ENCODE measurements at regions of chr17 and their contacts with region 1.

Region 1: GRCh38 chr17:45161019-45161825 is 453 bp upstream of the HEXIM2 start:
- DNase-seq: peak; percentile 98
- ATAC-seq: peak; percentile 93
- H3K4me3 Mint-ChIP-seq: peak overlapping the region; percentile 99
- H3K27ac Mint-ChIP-seq: peak overlapping the region; percentile 95
- H3K4me1 Mint-ChIP-seq: peaks cover 32% of the 10 kb centered on the region
- H3K27me3 Mint-ChIP-seq: no peaks in the 10 kb centered on the region
- CTCF ChIP-seq: no peak

Region 2: DNA sequence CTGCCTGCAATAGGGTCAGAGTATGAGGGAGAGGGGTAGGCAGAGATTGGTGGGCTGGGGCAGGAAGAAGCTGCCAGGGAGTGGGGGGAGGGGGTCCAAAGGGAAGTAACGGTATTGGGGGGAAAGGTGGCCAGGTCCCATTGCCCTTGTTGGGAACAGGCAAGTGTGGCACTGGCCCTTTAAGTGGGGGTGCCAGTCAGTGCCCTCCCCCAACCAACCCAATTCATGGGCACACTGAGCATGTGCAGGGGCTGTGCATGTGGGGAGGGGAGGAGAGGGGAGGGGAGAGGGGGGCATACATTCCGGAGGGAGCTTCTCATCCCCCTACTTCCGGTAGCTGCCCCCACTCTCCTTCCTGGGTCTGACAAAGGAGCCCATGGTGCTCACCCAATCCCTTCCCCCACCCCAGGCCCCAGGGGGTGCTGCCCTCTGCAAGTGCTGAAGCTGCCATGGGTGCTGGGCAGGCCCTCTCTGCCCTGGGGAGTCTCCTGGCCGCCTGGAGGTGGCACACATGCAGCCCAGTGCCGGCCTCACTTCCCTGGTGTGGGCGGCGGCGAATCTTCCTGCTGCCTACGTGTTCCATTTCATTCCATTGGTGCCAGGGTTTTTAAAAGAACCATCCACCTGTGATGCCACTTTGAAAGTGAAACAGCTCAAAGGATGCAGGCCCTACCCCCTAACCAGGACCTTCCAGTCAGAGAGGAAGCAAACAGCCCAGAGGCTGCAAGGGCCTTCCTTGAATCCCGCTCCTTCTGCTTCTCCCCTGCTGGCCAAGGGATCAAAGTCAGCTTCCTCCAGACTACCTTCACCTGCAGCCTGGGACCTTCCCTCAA is 11.4 kb after region 1 on chr17:
- CTCF ChIA-PET with region 1: interaction called, 42 read pairs
- POLR2A ChIA-PET with region 1: interaction called, 82 read pairs
- DNase-seq: peak; percentile 38
- ATAC-seq: peak; percentile 20
- H3K4me3 Mint-ChIP-seq: peak overlapping the region; percentile 5; the same call in 1 of the 2 replicates
- H3K27ac Mint-ChIP-seq: peak overlapping the region; percentile 98
- H3K4me1 Mint-ChIP-seq: peaks cover 29% of the 10 kb centered on the region
- H3K27me3 Mint-ChIP-seq: no peaks in the 10 kb centered on the region
- CTCF ChIP-seq: no peak